ENCODE measurements at regions of chr22 and their contacts with region 1.

Region 1: GRCh38 chr22:36921309-36922104 is 8.1 kb downstream of the CSF2RB start:
- DNase-seq: no peak

Region 2: GRCh38 chr22:36741204-36741793 is 180.2 kb before region 1 on chr22:
- intact Hi-C with region 1: no loop called
- DNase-seq: peak; percentile 24

Region 3: DNA sequence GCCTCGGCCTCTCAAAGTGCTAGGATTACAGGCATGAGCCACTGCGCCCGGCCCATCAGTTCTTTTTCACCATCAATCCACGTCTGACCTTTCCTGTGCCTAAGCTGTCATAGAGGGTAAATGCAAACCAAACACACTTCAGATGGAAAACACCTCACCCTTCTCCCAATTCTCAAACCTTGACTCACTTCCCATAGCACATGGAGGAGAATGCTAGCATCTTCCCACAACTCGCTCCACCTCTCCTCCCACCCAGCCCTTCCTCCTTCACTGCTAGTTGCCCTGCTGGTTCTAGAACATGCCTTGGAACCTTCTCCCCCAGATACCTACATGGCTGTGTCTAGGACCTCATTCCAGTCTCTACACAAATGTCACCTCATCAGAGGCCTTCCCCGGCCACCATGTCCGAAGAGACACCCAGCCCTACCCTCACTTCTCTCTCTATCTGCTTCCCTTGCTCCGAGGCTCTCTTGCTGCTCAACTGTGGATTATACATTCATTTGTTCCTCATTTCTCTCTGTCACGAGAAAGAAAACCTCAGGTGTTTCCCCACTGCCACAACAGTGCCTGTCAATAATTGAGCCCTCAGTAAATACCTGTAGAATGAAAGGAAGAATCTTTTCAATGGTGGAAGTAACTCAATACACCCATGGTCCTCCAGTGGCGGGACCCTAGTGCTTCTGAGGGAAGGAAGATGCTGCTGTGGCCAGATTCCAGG is 82.0 kb before region 1 on chr22:
- intact Hi-C with region 1: loop called in 1 of 2 experiments (anchors 2 kb)
- DNase-seq: no peak

Region 4: GRCh38 chr22:37019309-37020125 is 98.0 kb after region 1 on chr22 and contains the starts of genes MPST and TST:
- intact Hi-C with region 1: no loop called
- DNase-seq: peak; percentile 91
- total RNA-seq, gene MPST: 19.7 to 21.0 TPM
- total RNA-seq, gene TST: 8.9 to 9.3 TPM